GM12878 (cell line): ENCODE measurements at regions of chr1 and their contacts with region 1.

Region 1: DNA sequence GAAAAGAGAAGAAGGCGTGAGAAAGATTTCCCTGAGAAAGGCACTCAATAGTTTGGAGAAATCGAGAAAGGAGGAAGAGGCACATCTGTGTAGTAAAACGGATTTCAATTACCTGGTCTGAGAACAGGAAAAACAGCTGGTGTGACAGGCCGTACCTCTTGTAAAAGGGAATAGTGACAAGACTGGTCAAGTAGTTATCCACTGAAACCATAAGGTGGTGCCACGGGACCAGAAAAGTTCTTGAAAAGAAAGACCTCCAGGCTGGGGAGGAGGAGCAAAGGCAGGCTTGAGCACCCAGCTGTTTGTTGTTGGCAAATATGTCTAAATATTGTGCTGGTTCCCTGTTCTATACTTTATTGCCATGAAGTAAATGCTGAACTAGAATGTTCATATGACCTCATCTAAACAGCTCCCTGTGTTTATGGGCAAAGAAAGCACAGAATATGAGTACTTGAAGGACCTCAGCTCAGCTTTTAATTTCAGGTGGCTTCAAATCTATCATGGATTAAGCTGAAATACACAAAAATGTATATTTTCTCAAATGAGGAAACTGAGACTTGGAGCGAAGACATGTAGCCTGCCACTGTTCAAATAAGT is 4.0 kb downstream of the HAO2 start:
- DNase-seq: no peak
- ATAC-seq: peak; percentile 83
- H3K4me3 ChIP-seq: no peak overlapping the region
- H3K27ac ChIP-seq: no peak overlapping the region
- H3K4me1 ChIP-seq: peaks cover 5% of the 10 kb centered on the region; the same call in 1 of the 2 replicates
- H3K27me3 ChIP-seq: no peaks in the 10 kb centered on the region
- CTCF ChIP-seq: peak in 2 of 3 experiments; percentile 35 to 57; a peak in 4 of 6 replicates
- EP300 ChIP-seq: no peak
- POLR2A ChIP-seq: no peak
- RAD21 ChIP-seq: peak; percentile 56

Region 2: GRCh38 chr1:118575060-118575459 is 797.5 kb before region 1 on chr1:
- CTCF ChIA-PET with region 1: no interaction called
- POLR2A ChIA-PET with region 1: no interaction called
- RAD21 ChIA-PET with region 1: no interaction called
- SMC1A ChIA-PET with region 1: no interaction called
- in situ Hi-C with region 1: no loop called
- intact Hi-C with region 1: no loop called
- DNase-seq: no peak
- ATAC-seq: no peak
- H3K4me3 ChIP-seq: no peak overlapping the region
- H3K27ac ChIP-seq: no peak overlapping the region
- H3K4me1 ChIP-seq: no peaks in the 10 kb centered on the region
- H3K27me3 ChIP-seq: no peaks in the 10 kb centered on the region
- CTCF ChIP-seq: no peak
- EP300 ChIP-seq: no peak
- POLR2A ChIP-seq: no peak
- RAD21 ChIP-seq: no peak

Region 3: DNA sequence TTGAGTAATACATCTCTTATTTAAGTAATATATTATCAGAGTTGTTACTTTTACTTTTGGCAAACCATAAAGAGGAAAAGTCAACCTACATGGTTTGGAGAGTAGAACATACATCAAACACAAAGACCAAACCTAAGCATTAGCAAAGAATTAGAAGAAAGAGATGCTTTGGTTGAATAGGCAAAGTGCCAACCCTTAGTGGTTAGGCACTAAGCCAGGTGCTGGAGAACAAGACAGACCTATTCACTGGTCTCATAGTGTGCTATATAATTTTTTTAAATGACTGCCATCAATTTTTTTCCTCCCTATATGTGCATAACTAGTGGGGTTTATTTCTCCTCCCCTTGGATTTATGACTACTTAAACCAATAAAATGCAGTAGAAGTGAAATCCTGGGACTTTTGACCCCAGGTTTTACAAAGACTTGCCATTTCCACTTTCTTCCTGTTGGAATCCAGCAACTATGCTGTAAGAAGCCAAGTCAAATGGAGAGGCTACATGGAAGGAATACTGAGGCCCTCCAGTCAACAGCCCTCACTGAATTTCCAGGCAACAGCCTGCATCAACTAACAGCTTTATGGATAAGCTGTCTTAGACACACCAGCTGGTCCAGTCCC is 73.8 kb before region 1 on chr1:
- CTCF ChIA-PET with region 1: interaction called, 27 read pairs
- POLR2A ChIA-PET with region 1: no interaction called
- RAD21 ChIA-PET with region 1: interaction called, 9 read pairs
- SMC1A ChIA-PET with region 1: interaction called, 16 read pairs
- in situ Hi-C with region 1: no loop called
- intact Hi-C with region 1: no loop called
- DNase-seq: no peak
- ATAC-seq: peak; percentile 41
- H3K4me3 ChIP-seq: no peak overlapping the region
- H3K27ac ChIP-seq: no peak overlapping the region
- H3K4me1 ChIP-seq: no peaks in the 10 kb centered on the region
- H3K27me3 ChIP-seq: peaks cover 0 to 3% of the 10 kb centered on the region in 2 experiments; a peak in 1 of 4 replicates
- CTCF ChIP-seq: no peak
- EP300 ChIP-seq: no peak
- POLR2A ChIP-seq: no peak
- RAD21 ChIP-seq: no peak

Region 4: DNA sequence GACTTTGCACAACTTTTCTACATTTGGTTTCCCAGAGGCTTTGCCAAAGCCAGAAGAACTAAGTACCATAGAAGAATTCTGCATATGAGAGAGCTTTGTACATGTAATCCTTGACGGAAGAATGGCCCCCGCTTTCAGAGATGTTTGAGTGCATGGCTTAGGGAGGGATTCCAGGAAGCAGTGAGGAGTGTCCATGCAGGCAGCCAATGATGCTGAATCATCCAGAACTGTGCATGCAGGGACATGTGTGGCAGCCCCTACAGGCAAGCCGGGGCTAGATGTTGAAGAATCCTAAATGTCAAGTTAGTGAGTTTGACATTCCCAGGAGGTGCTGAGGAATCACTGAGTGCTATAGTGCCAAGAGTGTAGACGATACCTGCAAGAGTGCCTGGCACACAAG is 14.0 kb before region 1 on chr1:
- CTCF ChIA-PET with region 1: interaction called, 9 read pairs
- POLR2A ChIA-PET with region 1: interaction called, 3 read pairs
- RAD21 ChIA-PET with region 1: interaction called, 7 read pairs
- SMC1A ChIA-PET with region 1: interaction called, 12 read pairs
- in situ Hi-C with region 1: no loop called
- intact Hi-C with region 1: no loop called
- DNase-seq: no peak
- ATAC-seq: no peak
- H3K4me3 ChIP-seq: no peak overlapping the region
- H3K27ac ChIP-seq: no peak overlapping the region
- H3K4me1 ChIP-seq: peaks cover 7% of the 10 kb centered on the region; the same call in 1 of the 2 replicates
- H3K27me3 ChIP-seq: no peaks in the 10 kb centered on the region
- CTCF ChIP-seq: no peak
- EP300 ChIP-seq: no peak
- POLR2A ChIP-seq: no peak
- RAD21 ChIP-seq: no peak

Region 5: DNA sequence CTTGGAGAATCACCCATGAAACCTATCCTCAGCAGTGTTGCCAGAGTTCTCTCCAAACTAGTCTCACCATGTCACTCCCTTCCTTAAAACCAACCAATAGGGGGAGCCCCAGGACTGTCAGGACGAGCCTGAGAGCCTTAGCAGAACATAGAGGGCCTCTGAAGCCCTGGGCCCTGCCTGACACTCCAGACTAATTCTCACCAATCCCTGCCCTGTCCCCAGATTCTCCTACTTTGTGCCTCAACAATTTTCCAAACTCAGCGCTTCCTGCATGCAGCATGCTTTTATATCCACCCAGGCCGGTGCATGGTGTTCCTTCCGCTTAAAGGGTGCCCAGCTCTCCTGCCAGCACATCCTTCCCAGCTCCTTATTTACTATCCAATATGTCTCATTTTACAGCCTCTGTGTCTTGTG is 177.1 kb after region 1 on chr1:
- CTCF ChIA-PET with region 1: interaction called, 4 read pairs
- POLR2A ChIA-PET with region 1: no interaction called
- RAD21 ChIA-PET with region 1: no interaction called
- SMC1A ChIA-PET with region 1: no interaction called
- in situ Hi-C with region 1: no loop called
- intact Hi-C with region 1: loop called (anchors 5 kb)
- DNase-seq: no peak
- ATAC-seq: peak; percentile 96
- H3K4me3 ChIP-seq: no peak overlapping the region
- H3K27ac ChIP-seq: no peak overlapping the region
- H3K4me1 ChIP-seq: no peaks in the 10 kb centered on the region
- H3K27me3 ChIP-seq: no peaks in the 10 kb centered on the region; a peak in 2 of 4 replicates
- CTCF ChIP-seq: peak; percentile 48 to 70 (median 61)
- EP300 ChIP-seq: no peak
- POLR2A ChIP-seq: no peak
- RAD21 ChIP-seq: peak; percentile 69

Region 6: GRCh38 chr1:119662034-119662437 is 289.4 kb after region 1 on chr1:
- CTCF ChIA-PET with region 1: interaction called, 5 read pairs
- POLR2A ChIA-PET with region 1: no interaction called
- RAD21 ChIA-PET with region 1: interaction called, 15 read pairs
- SMC1A ChIA-PET with region 1: interaction called, 11 read pairs
- in situ Hi-C with region 1: no loop called
- intact Hi-C with region 1: loop called (anchors 2 kb)
- DNase-seq: peak; percentile 52
- ATAC-seq: peak; percentile 76
- H3K4me3 ChIP-seq: peak overlapping the region; percentile 15; the same call in 1 of the 2 replicates
- H3K27ac ChIP-seq: peak overlapping the region; percentile 61
- H3K4me1 ChIP-seq: peaks cover 23% of the 10 kb centered on the region
- H3K27me3 ChIP-seq: no peaks in the 10 kb centered on the region; a peak in 1 of 4 replicates
- CTCF ChIP-seq: no peak
- EP300 ChIP-seq: peak; percentile 65 to 94
- POLR2A ChIP-seq: no peak
- RAD21 ChIP-seq: no peak